Psoas muscle (tissue), 8 donors: ENCODE measurements at regions of chr2 and their contacts with region 1.

Region 1: DNA sequence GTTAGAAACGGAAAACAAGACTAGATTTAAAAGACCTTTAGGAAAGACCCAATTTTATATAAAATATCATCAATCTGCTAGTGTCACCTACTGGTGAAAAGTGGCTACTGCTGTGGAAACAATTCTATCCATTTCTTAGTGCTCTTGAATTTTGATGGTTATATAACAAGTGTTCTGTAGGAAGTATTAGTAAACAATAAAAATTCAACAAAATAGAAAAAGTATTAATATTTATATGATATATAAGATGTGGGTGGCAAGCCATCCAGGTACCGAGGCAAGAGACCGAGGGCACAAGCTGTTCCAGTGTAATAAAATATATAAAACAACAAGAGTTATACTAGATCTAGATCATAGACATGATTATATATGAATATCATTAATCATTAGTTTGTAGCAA is 6.2 kb upstream of the TMEM87B start:
- DNase-seq: no peak
- ATAC-seq: peak; percentile 71 to 88 (median 74)
- H3K4me3 ChIP-seq: no peak overlapping the region
- H3K27ac ChIP-seq: no peak overlapping the region
- H3K4me1 ChIP-seq: peaks cover 7% of the 10 kb centered on the region
- H3K27me3 ChIP-seq: no peaks in the 10 kb centered on the region
- CTCF ChIP-seq: peak; percentile 86

Region 2: GRCh38 chr2:111883661-111884591 is 165.0 kb before region 1 on chr2 and contains the start of gene ANAPC1:
- intact Hi-C with region 1: loop called in 1 of 2 experiments (anchors 2 kb)
- DNase-seq: peak; percentile 86 to 90
- ATAC-seq: peak; percentile 96 to 99 (median 98)
- H3K4me3 ChIP-seq: peak within 1 kb of the TSS; percentile 85
- H3K27ac ChIP-seq: peak within 1 kb of the TSS; percentile 82
- H3K4me1 ChIP-seq: peaks cover 8% of the 10 kb centered on the region
- H3K27me3 ChIP-seq: no peaks in the 10 kb centered on the region
- CTCF ChIP-seq: no peak
- total RNA-seq, gene ANAPC1: 16.3 to 23.9 (median 20.4) TPM

Region 3: DNA sequence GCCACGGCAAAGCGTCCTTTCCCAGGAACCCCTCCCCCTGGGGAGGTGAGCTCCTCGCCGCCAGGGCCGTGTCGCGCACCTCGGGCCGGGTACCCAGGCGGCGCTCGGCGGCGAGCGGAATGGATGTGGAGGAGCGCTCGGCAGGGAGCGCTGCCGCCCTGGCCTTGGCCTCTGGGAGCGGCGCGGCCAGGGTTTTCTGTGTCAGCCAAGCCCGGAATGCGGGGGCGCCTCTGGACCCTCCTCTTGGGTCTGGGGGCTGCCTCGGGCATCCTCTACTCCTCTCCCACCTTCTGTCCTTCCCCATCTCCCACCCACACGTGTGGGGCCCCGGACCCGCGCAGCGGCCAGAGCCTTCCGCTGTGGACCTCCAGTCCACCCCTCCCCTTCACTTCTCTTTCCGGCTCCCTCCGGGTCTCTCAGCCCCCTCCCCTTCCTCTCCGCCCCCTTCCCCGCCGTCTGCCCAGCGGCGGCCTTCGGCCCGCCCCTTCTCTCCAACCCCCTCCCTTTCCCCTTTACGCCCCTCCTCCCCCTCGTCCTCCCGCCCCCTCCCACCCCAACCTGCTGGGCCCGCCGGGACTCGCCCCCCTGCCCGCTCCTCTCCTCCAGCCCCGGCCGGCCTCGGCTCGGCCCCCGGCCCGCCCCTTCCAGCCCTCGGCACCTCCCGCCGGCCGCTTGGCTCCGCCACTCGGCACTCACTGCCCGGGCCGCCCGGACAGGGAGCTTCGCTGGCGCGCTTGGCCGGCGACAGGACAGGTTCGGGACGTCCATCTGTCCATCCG is 150.8 kb before region 1 on chr2 and contains the start of gene MERTK:
- intact Hi-C with region 1: loop called (anchors 2 to 5 kb)
- DNase-seq: peak; percentile 81 to 86
- ATAC-seq: peak; percentile 80 to 89 (median 86)
- H3K4me3 ChIP-seq: peak within 1 kb of the TSS; percentile 77
- H3K27ac ChIP-seq: peak within 1 kb of the TSS; percentile 47
- H3K4me1 ChIP-seq: peaks cover 5% of the 10 kb centered on the region
- H3K27me3 ChIP-seq: peaks cover 0 to 37% (median 5%) of the 10 kb centered on the region in 3 donors
- CTCF ChIP-seq: peak; percentile 54
- total RNA-seq, gene MERTK: 1.6 to 4.2 (median 2.4) TPM

Region 4: DNA sequence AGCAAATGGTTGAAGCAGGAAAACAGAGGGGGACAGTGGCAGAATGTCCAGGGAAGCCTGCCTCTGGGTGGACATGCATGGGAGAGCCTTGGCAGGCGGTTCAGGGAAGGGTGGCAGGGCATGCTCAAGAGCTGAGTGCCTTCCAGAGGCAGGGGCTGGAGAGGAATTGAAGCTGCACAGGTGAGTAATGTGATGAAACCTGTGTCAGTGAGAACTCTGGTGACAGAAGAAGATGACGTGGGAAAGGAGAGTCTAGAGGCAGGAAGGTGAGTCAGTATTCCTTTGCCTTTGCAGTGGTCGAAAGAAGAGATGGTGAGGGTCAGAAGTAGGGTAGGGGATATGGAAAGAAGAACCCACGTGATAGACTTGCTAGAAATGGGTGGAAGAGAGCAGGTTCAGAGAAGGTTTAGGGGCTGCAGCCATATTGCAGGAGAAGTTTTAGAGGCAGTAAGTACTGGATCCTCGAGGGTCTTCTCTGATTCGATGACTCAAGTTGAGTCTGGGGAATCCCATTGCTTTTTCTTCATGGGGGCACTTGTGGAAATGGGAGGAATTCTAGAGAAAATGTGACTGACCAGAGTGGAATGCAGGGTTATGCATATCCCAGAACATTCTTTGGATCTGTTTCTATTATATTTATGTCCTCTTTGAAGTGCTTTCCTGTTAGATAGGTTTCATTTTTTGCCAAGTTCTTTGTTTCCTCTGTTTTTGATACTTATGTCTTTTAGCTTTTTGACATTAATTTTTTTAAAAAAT is 43.6 kb after region 1 on chr2:
- intact Hi-C with region 1: no loop called
- DNase-seq: no peak
- ATAC-seq: no peak
- H3K4me3 ChIP-seq: no peak overlapping the region
- H3K27ac ChIP-seq: no peak overlapping the region
- H3K4me1 ChIP-seq: no peaks in the 10 kb centered on the region
- H3K27me3 ChIP-seq: no peaks in the 10 kb centered on the region
- CTCF ChIP-seq: no peak